ENCODE measurements at regions of chr1 and their contacts with region 1.

Region 1: DNA sequence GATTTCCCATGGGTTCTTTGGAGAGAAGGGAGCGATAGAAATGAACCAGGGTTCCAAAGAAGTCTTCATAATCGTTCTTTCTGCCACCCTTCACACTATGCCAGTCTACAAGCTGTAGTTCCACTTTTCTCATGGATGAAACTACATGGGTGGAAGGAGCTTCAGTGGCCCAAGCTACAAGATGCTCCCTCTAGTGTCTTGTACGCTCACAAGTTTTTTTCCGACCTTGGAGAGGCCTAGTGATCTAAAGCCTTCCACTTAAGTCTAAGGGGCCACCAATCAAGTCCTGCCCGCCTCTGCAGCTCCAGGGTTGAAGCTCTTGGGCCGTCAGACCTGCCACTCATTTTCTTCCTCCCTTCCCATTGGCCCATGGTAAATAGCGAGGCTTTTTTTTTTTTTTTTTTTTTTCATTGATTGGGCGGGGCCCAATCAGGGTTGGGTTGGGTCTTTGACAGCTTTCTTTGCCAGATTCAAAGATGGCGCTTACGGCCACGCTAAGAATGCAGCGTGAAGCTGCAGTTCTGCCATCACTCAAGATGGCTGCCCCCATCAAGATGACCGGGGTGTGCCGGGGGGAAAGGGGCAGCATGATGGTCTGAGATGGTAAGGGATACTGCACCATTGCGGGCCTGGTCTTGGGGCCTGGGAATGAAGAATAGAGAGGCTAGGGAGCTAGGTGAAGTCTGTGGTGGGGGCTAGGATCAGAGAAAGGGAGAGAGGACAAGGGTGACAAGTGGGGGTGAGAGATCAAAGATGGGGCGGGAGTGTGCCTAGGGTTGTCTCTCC is at the start of gene TOMM40L:
- DNase-seq: peak; percentile 66 to 96 (median 92)
- ATAC-seq: peak; percentile 95
- H3K4me3 ChIP-seq: peak within 1 kb of the TSS; percentile 73
- H3K4me3 Mint-ChIP-seq: peak within 1 kb of the TSS; percentile 89 to 100 (median 98)
- H3K27ac ChIP-seq: peak within 1 kb of the TSS; percentile 70
- H3K27ac Mint-ChIP-seq: peak within 1 kb of the TSS; percentile 69 to 99 (median 97)
- H3K4me1 ChIP-seq: peaks cover 8 to 24% of the 10 kb centered on the region in 2 donors
- H3K4me1 Mint-ChIP-seq: peaks cover 19 to 58% (median 43%) of the 10 kb centered on the region in 7 donors
- H3K27me3 ChIP-seq: no peaks in the 10 kb centered on the region
- H3K27me3 Mint-ChIP-seq: no peaks in the 10 kb centered on the region
- total RNA-seq, gene TOMM40L: 8.9 to 24.3 (median 11.8) TPM

Region 2: GRCh38 chr1:161045750-161046571 is 179.8 kb before region 1 on chr1 and contains the start of gene USF1:
- CTCF ChIA-PET with region 1: no interaction called
- POLR2A ChIA-PET with region 1: interaction called, 5 read pairs
- intact Hi-C with region 1: loop called in 1 of 2 experiments (anchors 10 kb)
- DNase-seq: peak; percentile 84 to 96 (median 93)
- ATAC-seq: peak; percentile 89
- H3K4me3 ChIP-seq: peak within 1 kb of the TSS; percentile 93
- H3K4me3 Mint-ChIP-seq: peak within 1 kb of the TSS; percentile 93 to 100 (median 97)
- H3K27ac ChIP-seq: peak within 1 kb of the TSS; percentile 92
- H3K27ac Mint-ChIP-seq: peak within 1 kb of the TSS; percentile 92 to 100 (median 99)
- H3K4me1 ChIP-seq: peaks cover 17 to 23% of the 10 kb centered on the region in 2 donors
- H3K4me1 Mint-ChIP-seq: peaks cover 41 to 54% (median 49%) of the 10 kb centered on the region in 7 donors
- H3K27me3 ChIP-seq: no peaks in the 10 kb centered on the region
- H3K27me3 Mint-ChIP-seq: no peaks in the 10 kb centered on the region
- total RNA-seq, gene USF1: 71.6 to 115 (median 91.7) TPM

Region 3: GRCh38 chr1:161083743-161084571 is 141.8 kb before region 1 on chr1:
- CTCF ChIA-PET with region 1: no interaction called
- POLR2A ChIA-PET with region 1: no interaction called
- intact Hi-C with region 1: no loop called
- DNase-seq: no peak
- ATAC-seq: no peak
- H3K4me3 ChIP-seq: no peak overlapping the region
- H3K4me3 Mint-ChIP-seq: no peak overlapping the region
- H3K27ac ChIP-seq: no peak overlapping the region
- H3K27ac Mint-ChIP-seq: no peak overlapping the region
- H3K4me1 ChIP-seq: no peaks in the 10 kb centered on the region
- H3K4me1 Mint-ChIP-seq: peaks cover 0 to 11% (median 0%) of the 10 kb centered on the region in 7 donors
- H3K27me3 ChIP-seq: no peaks in the 10 kb centered on the region
- H3K27me3 Mint-ChIP-seq: peaks cover 0 to 4% (median 0%) of the 10 kb centered on the region in 5 donors

Region 4: DNA sequence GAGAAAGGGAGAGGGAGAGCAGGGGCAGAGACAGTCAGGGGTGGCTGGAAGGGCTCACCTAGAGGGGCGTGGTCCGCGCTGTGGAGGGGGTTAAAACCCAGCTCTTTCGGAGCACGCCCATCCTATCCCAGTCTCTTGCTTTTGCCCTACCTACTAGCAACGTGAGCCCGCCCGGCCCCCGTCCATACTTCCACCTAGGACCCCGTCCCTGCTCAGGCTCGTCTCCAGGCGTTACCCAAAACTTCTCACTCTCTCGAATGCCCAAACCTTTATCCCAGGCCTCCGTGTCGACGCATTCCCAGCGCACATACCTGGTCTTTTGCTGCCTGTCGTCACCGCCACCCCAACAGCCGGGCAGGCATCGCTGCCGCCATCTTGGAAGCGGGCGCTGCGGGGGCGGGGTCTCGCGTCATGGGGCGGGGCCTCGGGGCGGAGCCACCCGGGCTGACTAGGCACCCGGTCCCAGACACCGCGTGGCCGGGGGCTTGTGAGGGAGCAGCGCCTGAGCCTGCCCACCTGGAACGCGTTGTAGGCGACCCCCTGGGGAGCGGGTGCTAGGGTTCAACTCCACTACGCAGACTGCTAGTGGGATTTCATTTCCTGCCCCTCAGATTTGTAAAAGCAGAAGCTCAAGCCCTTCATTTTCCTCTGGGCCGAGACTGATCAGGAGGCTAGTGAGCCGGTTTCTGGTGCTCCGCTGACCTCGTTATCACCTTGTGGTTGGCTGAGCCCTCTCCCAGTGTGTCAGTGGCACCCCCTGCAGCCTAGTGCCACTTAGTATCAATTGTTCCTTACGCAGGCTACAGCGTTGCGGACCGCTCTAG is 48.4 kb before region 1 on chr1 and contains the start of gene B4GALT3:
- CTCF ChIA-PET with region 1: interaction called, 37 read pairs
- POLR2A ChIA-PET with region 1: interaction called, 35 read pairs
- intact Hi-C with region 1: loop called (anchors 1 kb)
- DNase-seq: peak; percentile 87 to 99 (median 92)
- ATAC-seq: peak; percentile 96
- H3K4me3 ChIP-seq: peak within 1 kb of the TSS; percentile 93
- H3K4me3 Mint-ChIP-seq: peak within 1 kb of the TSS; percentile 94 to 100 (median 98)
- H3K27ac ChIP-seq: peak within 1 kb of the TSS; percentile 93
- H3K27ac Mint-ChIP-seq: peak within 1 kb of the TSS; percentile 94 to 100 (median 97)
- H3K4me1 ChIP-seq: peaks cover 36 to 39% of the 10 kb centered on the region in 2 donors
- H3K4me1 Mint-ChIP-seq: peaks cover 54 to 87% (median 74%) of the 10 kb centered on the region in 7 donors
- H3K27me3 ChIP-seq: no peaks in the 10 kb centered on the region
- H3K27me3 Mint-ChIP-seq: no peaks in the 10 kb centered on the region
- total RNA-seq, gene B4GALT3: 40.5 to 83.7 (median 54.3) TPM

Region 5: GRCh38 chr1:161201828-161202725 is 23.6 kb before region 1 on chr1 and contains the start of gene NDUFS2:
- CTCF ChIA-PET with region 1: interaction called, 66 read pairs
- POLR2A ChIA-PET with region 1: interaction called, 508 read pairs
- intact Hi-C with region 1: loop called (anchors 1 kb)
- DNase-seq: peak; percentile 71 to 98 (median 92)
- ATAC-seq: peak; percentile 99
- H3K4me3 ChIP-seq: peak within 1 kb of the TSS; percentile 78
- H3K4me3 Mint-ChIP-seq: peak within 1 kb of the TSS; percentile 90 to 98 (median 95)
- H3K27ac ChIP-seq: peak within 1 kb of the TSS; percentile 97
- H3K27ac Mint-ChIP-seq: peak within 1 kb of the TSS; percentile 96 to 99 (median 98)
- H3K4me1 ChIP-seq: peaks cover 35 to 60% of the 10 kb centered on the region in 2 donors
- H3K4me1 Mint-ChIP-seq: peaks cover 36 to 83% (median 66%) of the 10 kb centered on the region in 7 donors
- H3K27me3 ChIP-seq: no peaks in the 10 kb centered on the region
- H3K27me3 Mint-ChIP-seq: no peaks in the 10 kb centered on the region
- total RNA-seq, gene NDUFS2: 64.1 to 131 (median 85.3) TPM

Region 6: GRCh38 chr1:161290779-161291178 is 65.1 kb after region 1 on chr1:
- CTCF ChIA-PET with region 1: interaction called, 16 read pairs
- POLR2A ChIA-PET with region 1: interaction called, 5 read pairs
- intact Hi-C with region 1: loop called (anchors 1 kb)
- DNase-seq: no peak
- ATAC-seq: no peak
- H3K4me3 ChIP-seq: no peak overlapping the region
- H3K4me3 Mint-ChIP-seq: no peak overlapping the region
- H3K27ac ChIP-seq: no peak overlapping the region
- H3K27ac Mint-ChIP-seq: peak overlapping the region in 2 of 9 donors; percentile 28 to 61
- H3K4me1 ChIP-seq: no peaks in the 10 kb centered on the region
- H3K4me1 Mint-ChIP-seq: peaks cover 0 to 6% (median 0%) of the 10 kb centered on the region in 7 donors
- H3K27me3 ChIP-seq: no peaks in the 10 kb centered on the region
- H3K27me3 Mint-ChIP-seq: no peaks in the 10 kb centered on the region

Region 7: GRCh38 chr1:161367684-161368400 is 142.1 kb after region 1 on chr1 and contains the start of gene CFAP126:
- CTCF ChIA-PET with region 1: interaction called, 6 read pairs
- POLR2A ChIA-PET with region 1: no interaction called
- intact Hi-C with region 1: loop called (anchors 1 to 5 kb)
- DNase-seq: peak in 7 of 9 donors; percentile 38 to 74 (median 60)
- ATAC-seq: peak; percentile 100
- H3K4me3 ChIP-seq: no peak within 1 kb of the TSS
- H3K4me3 Mint-ChIP-seq: no peak within 1 kb of the TSS
- H3K27ac ChIP-seq: peak within 1 kb of the TSS; percentile 59
- H3K27ac Mint-ChIP-seq: peak within 1 kb of the TSS; percentile 42 to 87 (median 62)
- H3K4me1 ChIP-seq: no peaks in the 10 kb centered on the region
- H3K4me1 Mint-ChIP-seq: peaks cover 5 to 19% (median 9%) of the 10 kb centered on the region in 7 donors
- H3K27me3 ChIP-seq: no peaks in the 10 kb centered on the region
- H3K27me3 Mint-ChIP-seq: no peaks in the 10 kb centered on the region
- total RNA-seq, gene CFAP126: not detected

Region 8: DNA sequence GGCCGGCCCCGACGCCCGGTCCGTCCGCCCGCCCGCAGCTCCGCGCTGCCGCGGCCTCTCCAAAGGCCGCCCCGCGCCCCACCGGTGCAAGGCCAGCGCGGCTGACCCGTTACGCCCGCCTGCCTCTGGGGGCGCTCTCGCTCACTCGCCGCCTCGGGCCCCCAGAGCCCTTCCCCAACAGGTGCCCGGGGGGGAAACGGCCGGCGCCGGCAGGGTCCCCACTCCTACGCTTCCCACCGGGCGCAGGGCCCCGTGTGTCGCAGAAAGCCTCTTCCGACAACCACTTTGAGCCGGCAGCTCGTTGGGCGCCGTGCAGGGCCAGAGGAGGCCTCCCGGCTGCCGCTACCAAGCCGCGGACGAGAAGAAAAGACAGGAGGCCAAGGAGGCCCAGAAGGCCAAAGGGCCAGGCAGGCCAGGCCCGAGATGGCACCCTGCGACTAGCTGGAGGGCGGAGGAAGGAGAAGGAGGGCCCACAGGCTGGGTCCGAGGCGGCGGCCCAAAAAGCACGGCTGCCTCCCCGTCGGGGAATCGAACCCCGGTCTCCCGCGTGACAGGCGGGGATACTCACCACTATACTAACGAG is 214.7 kb after region 1 on chr1:
- CTCF ChIA-PET with region 1: no interaction called
- POLR2A ChIA-PET with region 1: no interaction called
- intact Hi-C with region 1: no loop called
- DNase-seq: peak in 7 of 9 donors; percentile 26 to 84 (median 36)
- ATAC-seq: peak; percentile 51
- H3K4me3 ChIP-seq: peak overlapping the region; percentile 52
- H3K4me3 Mint-ChIP-seq: peak overlapping the region; percentile 61 to 90 (median 83)
- H3K27ac ChIP-seq: no peak overlapping the region
- H3K27ac Mint-ChIP-seq: peak overlapping the region in 1 of 9 donors; percentile 91
- H3K4me1 ChIP-seq: peaks cover 0 to 6% of the 10 kb centered on the region in 2 donors
- H3K4me1 Mint-ChIP-seq: peaks cover 0 to 22% (median 16%) of the 10 kb centered on the region in 7 donors
- H3K27me3 ChIP-seq: peaks cover 0 to 5% of the 10 kb centered on the region in 2 donors
- H3K27me3 Mint-ChIP-seq: peaks cover 33 to 45% (median 41%) of the 10 kb centered on the region in 5 donors

Region 9: DNA sequence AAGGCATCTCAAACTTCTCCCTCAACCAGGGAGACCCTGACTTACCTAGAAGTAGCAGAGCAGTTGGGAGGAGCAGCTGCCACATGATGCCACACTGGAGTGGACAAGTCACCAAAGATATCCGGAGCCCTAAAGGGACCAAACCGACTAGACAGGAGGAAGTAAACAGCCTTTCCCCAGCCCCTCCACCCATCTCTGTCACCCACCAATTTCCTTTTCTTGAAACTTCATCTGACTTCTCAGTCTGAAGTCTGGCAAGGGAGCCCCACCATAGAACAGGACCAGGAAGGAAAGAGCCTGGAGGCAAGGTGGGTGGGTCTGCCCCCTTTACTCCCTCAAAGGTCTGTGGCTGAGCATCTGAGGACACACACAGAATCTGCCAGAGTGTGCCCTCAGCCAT is 323.9 kb after region 1 on chr1 and contains the start of gene FCGR3A:
- CTCF ChIA-PET with region 1: no interaction called
- POLR2A ChIA-PET with region 1: no interaction called
- intact Hi-C with region 1: no loop called
- DNase-seq: no peak
- ATAC-seq: peak; percentile 46
- H3K4me3 ChIP-seq: no peak within 1 kb of the TSS
- H3K4me3 Mint-ChIP-seq: peak within 1 kb of the TSS in 1 of 10 donors; percentile 77
- H3K27ac ChIP-seq: no peak within 1 kb of the TSS
- H3K27ac Mint-ChIP-seq: peak within 1 kb of the TSS in 1 of 9 donors; percentile 17
- H3K4me1 ChIP-seq: peaks cover 0 to 21% of the 10 kb centered on the region in 2 donors
- H3K4me1 Mint-ChIP-seq: peaks cover 5 to 16% (median 7%) of the 10 kb centered on the region in 7 donors
- H3K27me3 ChIP-seq: no peaks in the 10 kb centered on the region
- H3K27me3 Mint-ChIP-seq: peaks cover 0 to 5% (median 0%) of the 10 kb centered on the region in 5 donors
- total RNA-seq, gene FCGR3A: 1.5 to 190 (median 9.3) TPM in 4 of 5 experiments, not detected in the other

Region 10: GRCh38 chr1:161738627-161739287 is 513.0 kb after region 1 on chr1:
- CTCF ChIA-PET with region 1: no interaction called
- POLR2A ChIA-PET with region 1: no interaction called
- intact Hi-C with region 1: loop called in 1 of 2 experiments (anchors 5 kb)
- DNase-seq: peak in 8 of 9 donors; percentile 17 to 55 (median 47)
- ATAC-seq: peak; percentile 83
- H3K4me3 ChIP-seq: no peak overlapping the region
- H3K4me3 Mint-ChIP-seq: peak overlapping the region in 1 of 10 donors; percentile 28
- H3K27ac ChIP-seq: no peak overlapping the region
- H3K27ac Mint-ChIP-seq: peak overlapping the region in 1 of 9 donors; percentile 74
- H3K4me1 ChIP-seq: peaks cover 4 to 25% of the 10 kb centered on the region in 2 donors
- H3K4me1 Mint-ChIP-seq: peaks cover 0 to 42% (median 18%) of the 10 kb centered on the region in 7 donors
- H3K27me3 ChIP-seq: no peaks in the 10 kb centered on the region
- H3K27me3 Mint-ChIP-seq: peaks cover 0 to 36% (median 5%) of the 10 kb centered on the region in 5 donors